ENCODE measurements at regions of chr3 and their contacts with region 1.

Region 1: DNA sequence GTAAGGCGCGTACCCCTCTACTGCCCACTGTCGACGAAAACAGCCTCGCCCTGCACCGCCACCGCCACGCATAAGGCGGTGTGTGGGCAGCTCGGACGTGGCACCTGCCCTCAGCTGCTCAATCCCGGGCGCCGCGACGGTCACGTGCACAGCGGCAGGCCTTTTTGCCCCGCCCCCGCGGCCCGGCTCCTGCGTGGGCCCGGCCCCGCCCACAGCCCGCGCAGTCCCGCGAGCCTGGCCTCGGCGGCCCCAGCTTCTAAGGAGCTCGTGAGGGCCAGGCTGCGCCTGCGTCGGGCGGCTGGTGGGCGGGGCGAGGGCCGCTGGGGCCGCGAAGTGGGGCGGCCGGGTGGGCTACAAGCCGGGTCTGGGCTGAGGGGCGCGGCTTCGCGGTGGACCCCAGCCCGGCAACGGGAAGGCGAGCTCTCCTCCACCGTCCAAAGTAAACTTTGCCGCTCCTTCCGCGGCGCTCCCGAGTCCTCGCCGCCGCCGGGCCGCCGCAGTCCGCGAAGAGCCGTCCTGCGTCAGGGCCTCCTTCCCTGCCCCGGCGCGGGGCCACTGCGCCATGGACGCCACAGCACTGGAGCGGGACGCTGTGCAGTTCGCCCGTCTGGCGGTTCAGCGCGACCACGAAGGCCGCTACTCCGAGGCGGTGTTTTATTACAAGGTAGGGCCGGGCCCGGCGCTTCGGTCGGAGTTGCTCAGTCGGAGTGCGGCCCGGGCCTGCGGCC is at the start of gene CAPN7:
- DNase-seq: peak; percentile 96 to 99 (median 99)
- ATAC-seq: peak; percentile 99
- H3K4me3 ChIP-seq: peak within 1 kb of the TSS; percentile 88
- H3K27ac ChIP-seq: peak within 1 kb of the TSS; percentile 74
- H3K4me1 ChIP-seq: no peaks in the 10 kb centered on the region
- H3K27me3 ChIP-seq: no peaks in the 10 kb centered on the region
- total RNA-seq, gene CAPN7: 28.5 to 33.7 (median 30.9) TPM

Region 2: DNA sequence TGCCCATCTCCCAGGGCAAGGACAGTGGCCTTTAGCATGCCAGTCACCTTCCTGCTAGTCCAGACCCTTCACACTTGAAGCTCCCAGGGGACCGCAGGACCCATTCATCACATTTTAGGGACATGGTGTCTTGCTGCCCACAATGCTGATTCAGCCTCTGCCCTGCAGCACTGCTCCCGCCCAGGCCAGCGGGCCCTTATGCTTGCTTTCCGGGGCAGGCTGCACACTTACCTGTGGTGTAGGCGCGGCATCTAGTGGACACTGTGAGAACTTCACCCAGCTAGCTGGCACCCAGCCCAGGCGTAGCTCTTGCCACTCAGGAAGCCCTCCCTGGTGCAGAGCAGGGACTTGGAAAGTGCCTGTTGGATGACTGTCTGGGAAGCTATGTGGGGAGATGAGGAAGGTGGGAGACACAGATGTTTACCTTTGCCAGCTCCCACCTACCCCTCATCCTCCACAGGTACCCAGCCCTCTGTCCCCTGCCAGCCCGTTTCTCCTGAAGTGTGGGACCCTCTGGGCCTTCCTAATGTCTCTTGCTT is 285.0 kb before region 1 on chr3:
- intact Hi-C with region 1: loop called in 1 of 4 experiments (anchors 10 kb)
- DNase-seq: peak; percentile 87 to 96 (median 95)
- ATAC-seq: peak; percentile 91 to 93
- H3K4me3 ChIP-seq: no peak overlapping the region
- H3K27ac ChIP-seq: no peak overlapping the region
- H3K4me1 ChIP-seq: no peaks in the 10 kb centered on the region
- H3K27me3 ChIP-seq: no peaks in the 10 kb centered on the region

Region 3: GRCh38 chr3:15284121-15284889 is 78.2 kb after region 1 on chr3:
- intact Hi-C with region 1: no loop called
- DNase-seq: peak in 1 of 3 donors; percentile 69
- ATAC-seq: peak; percentile 30 to 52
- H3K4me3 ChIP-seq: no peak overlapping the region
- H3K27ac ChIP-seq: peak overlapping the region; percentile 34
- H3K4me1 ChIP-seq: peaks cover 9% of the 10 kb centered on the region
- H3K27me3 ChIP-seq: no peaks in the 10 kb centered on the region

Region 4: DNA sequence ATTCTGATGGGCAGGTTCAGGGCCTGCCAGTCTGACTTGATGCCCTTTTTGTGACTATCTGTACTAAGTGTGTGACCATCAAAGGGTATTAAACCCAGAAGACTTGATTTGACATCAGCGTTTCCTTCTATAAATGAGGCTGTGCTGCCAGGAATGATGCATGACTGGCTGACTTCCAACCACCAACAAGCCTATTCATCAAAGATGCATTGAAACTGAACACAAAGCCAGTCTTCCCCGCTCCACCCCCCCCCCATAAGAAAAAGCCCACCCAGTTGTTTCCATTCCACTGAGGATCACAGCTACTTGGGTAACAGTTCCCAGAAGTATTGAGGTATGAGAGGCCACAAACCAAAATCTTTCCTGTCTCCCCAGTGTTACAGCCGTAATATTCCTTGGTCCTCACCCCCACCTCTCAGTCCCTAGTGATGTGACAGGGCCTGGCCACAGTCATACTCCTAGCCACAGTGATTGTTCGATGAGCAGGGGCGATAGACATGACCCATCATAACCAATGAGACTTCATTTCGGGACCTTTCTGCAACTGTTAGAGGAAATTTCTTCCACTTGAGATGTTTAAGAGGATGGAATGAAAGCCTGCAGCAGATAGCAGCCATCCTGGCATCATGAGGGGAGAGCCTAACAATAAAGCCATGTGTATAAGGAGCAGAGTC is 103.7 kb after region 1 on chr3:
- intact Hi-C with region 1: no loop called
- DNase-seq: no peak
- ATAC-seq: peak in 1 of 2 donors; percentile 17
- H3K4me3 ChIP-seq: no peak overlapping the region
- H3K27ac ChIP-seq: no peak overlapping the region
- H3K4me1 ChIP-seq: peaks cover 15% of the 10 kb centered on the region
- H3K27me3 ChIP-seq: no peaks in the 10 kb centered on the region

Region 5: DNA sequence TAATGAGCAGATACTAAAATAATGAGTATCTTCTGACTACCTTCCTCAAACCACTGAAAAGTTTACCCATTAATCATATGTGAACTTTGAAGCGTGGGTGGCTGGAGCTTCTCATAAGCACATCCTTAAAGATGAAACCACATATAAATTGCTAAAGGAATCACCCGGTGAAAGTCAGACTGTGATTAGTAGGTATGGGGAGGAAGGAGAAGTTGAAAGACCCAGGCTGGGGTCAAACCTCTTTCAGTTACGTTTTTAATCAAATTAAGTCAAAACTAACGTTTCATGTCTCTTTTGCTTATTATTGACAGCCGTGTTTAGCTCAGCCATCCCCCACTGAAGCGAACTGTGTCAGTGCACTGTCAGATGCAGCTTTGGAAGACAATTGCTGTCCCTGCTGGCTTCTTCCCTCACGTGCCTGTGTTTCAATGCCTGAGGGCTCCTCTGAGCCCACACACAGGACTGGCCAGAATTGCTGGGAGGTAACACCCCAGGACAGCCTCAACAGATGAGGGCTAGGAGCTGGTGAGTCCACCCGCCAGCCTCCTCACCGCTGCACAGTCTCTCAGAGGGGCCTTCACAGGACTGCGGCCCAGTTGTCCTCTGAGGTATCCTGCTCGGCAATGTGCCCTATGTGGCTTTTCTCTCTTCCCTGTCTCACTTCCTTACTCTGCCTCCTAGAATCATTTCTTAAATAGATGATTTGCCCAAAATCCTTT is 155.6 kb after region 1 on chr3:
- intact Hi-C with region 1: no loop called
- DNase-seq: peak in 1 of 3 donors; percentile 53
- ATAC-seq: peak; percentile 42 to 48
- H3K4me3 ChIP-seq: no peak overlapping the region
- H3K27ac ChIP-seq: no peak overlapping the region
- H3K4me1 ChIP-seq: no peaks in the 10 kb centered on the region
- H3K27me3 ChIP-seq: no peaks in the 10 kb centered on the region

Region 6: GRCh38 chr3:15384510-15385237 is 178.6 kb after region 1 on chr3:
- intact Hi-C with region 1: loop called in 1 of 4 experiments (anchors 10 kb)
- DNase-seq: no peak
- ATAC-seq: no peak
- H3K4me3 ChIP-seq: no peak overlapping the region
- H3K27ac ChIP-seq: no peak overlapping the region
- H3K4me1 ChIP-seq: peaks cover 2% of the 10 kb centered on the region
- H3K27me3 ChIP-seq: no peaks in the 10 kb centered on the region

Region 7: DNA sequence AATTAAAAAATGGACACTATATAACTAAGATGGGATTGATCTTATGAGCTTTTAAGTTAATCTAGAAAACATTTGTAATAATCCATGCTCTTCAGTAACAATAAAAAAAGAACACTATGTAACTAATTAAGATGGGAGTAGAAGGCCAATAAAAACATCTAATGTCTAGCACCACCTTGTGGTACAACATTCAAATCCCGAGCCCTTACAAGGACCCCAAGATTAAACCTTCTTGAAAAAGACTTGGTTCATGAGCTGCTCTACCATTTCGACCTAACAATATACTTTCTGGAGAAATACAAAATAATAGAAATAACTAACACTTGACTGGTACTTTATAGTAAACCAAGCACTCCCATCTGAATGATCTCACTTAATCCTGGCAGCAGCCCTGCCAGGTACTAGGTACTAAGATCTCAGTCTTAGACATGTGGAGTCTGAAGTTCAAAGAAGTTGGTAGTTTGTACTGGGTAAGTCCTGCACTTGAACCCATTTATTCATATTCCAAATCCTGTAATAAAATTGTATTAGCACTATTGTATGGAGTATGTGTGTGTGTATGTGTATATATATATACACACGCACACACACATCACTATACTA is 199.5 kb after region 1 on chr3:
- intact Hi-C with region 1: loop called in 1 of 4 experiments (anchors 10 kb)
- DNase-seq: no peak
- ATAC-seq: peak; percentile 64 to 72
- H3K4me3 ChIP-seq: no peak overlapping the region
- H3K27ac ChIP-seq: no peak overlapping the region
- H3K4me1 ChIP-seq: no peaks in the 10 kb centered on the region
- H3K27me3 ChIP-seq: no peaks in the 10 kb centered on the region

Region 8: GRCh38 chr3:15557511-15557946 is 351.4 kb after region 1 on chr3:
- intact Hi-C with region 1: loop called in 1 of 4 experiments (anchors 10 kb)
- DNase-seq: peak in 1 of 3 donors; percentile 47
- ATAC-seq: peak; percentile 74 to 87
- H3K4me3 ChIP-seq: no peak overlapping the region
- H3K27ac ChIP-seq: no peak overlapping the region
- H3K4me1 ChIP-seq: no peaks in the 10 kb centered on the region
- H3K27me3 ChIP-seq: no peaks in the 10 kb centered on the region

Measured in right cardiac atrium (tissue), 5 donors.